Left cardiac atrium (tissue), 4 donors: ENCODE measurements at regions of chr19 and their contacts with region 1.

Region 1: DNA sequence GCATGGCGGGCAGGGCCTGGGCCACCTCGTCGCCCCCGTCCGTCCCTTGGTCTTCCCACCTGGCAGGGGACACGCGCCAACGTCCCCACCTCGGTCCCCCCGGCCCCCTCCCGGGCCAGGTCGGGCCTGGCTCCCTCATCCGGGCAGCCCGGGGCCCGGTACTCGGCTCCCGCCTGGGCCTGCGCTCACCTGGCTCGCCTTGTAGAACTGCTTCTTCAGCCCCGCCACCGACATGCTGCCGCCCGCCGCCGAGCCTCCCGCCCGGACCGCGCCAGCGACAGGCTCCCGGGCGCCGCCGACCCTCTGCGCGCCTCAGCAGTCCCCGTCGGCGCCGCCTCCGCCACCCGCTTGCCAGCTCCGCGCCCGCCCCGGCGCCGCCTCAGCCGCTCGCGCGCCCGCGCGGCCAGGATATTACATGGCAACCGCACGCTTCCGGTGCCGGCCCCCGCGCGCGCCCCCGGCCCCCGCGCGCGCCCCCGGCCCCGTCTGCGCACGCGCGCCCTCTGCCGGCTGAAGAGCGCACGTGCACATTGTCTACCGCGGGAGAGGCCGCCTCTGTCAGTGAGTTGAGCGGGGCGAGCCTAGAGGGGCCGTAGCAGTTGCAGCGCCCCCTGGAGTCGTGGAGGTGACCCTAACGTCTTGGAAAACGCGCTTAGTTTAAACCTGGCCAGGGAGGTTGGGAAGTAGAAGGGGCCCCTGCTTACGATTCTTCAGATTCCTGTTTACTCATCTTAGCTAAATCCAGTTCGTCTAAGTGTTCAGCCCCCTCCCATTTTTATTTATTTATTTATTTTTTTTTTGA is at the start of gene SH3GL1:
- DNase-seq: peak; percentile 93
- ATAC-seq: peak; percentile 73 to 80
- total RNA-seq, gene SH3GL1: 31.4 to 39.4 TPM

Region 2: DNA sequence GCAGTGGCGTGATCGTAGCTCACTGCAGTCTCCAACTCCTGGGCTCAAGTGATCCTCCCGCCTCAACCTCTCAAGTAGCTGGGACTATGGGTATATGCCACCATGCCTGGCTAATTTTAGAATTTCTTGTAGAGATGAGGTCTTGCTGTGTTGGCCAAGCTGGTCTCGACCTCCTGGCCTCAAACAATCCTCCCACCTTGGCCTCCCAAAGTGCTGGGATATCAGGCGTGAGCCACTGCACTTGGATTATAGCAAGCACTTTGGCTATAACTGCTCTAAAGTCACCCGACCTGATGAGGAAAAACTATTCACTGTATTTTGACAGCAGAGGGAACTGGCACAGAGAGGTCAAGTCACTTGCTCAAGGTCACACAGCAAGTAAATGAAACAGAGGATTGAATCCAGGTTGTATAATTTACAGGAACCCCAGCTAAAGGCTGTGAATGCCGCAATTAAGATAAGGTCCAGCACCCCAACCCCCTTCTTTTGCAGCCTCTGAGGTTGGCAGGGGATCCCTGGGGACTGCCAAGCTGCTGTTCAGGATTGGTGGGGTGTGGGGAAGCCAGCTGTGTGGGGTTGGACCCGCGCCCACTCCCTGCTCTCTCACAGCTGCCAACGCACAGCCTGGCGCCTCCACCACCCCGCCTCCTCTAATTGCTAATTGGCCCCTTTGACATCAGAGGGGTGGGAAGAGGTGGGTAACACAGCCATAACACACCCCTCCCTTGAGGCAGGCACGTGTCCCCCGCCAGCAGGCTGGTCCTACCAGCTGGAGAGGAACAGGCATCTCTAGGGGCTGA is 104.2 kb before region 1 on chr19:
- intact Hi-C with region 1: no loop called
- DNase-seq: no peak
- ATAC-seq: peak in 1 of 2 donors; percentile 27

Region 3: GRCh38 chr19:4352701-4353121 is 47.6 kb before region 1 on chr19:
- intact Hi-C with region 1: loop called in 1 of 2 experiments (anchors 10 kb)
- DNase-seq: no peak
- ATAC-seq: peak; percentile 50 to 61

Region 4: GRCh38 chr19:4369888-4370260 is 30.5 kb before region 1 on chr19:
- intact Hi-C with region 1: loop called in 1 of 2 experiments (anchors 2 kb)
- DNase-seq: no peak
- ATAC-seq: peak; percentile 15 to 17

Region 5: GRCh38 chr19:4457654-4458395 is 57.5 kb after region 1 on chr19 and contains the start of gene UBXN6:
- intact Hi-C with region 1: loop called (anchors 10 kb)
- DNase-seq: peak; percentile 99
- ATAC-seq: peak; percentile 86 to 87
- total RNA-seq, gene UBXN6: 96.9 to 101 TPM